ENCODE measurements at regions of chr17 and their contacts with region 1.

Region 1: GRCh38 chr17:58249270-58250133 is 11.1 kb downstream of the LPO start:
- DNase-seq: peak; percentile 99
- H3K4me3 ChIP-seq: peak overlapping the region; percentile 47 to 71
- H3K27ac ChIP-seq: no peak overlapping the region
- H3K4me1 ChIP-seq: peaks cover 0 to 8% of the 10 kb centered on the region in 2 experiments; a peak in 1 of 4 replicates
- H3K27me3 ChIP-seq: peaks cover 79% of the 10 kb centered on the region
- CTCF ChIP-seq: peak; percentile 99
- EP300 ChIP-seq: no peak
- RAD21 ChIP-seq: peak; percentile 66

Region 2: GRCh38 chr17:58200017-58200633 is 49.4 kb before region 1 on chr17:
- CTCF ChIA-PET with region 1: interaction called, 34 read pairs
- POLR2A ChIA-PET with region 1: no interaction called
- DNase-seq: peak; percentile 89
- H3K4me3 ChIP-seq: peak overlapping the region in 1 of 2 experiments; percentile 11; a peak in 2 of 4 replicates
- H3K27ac ChIP-seq: no peak overlapping the region
- H3K4me1 ChIP-seq: peaks cover 0 to 4% of the 10 kb centered on the region in 2 experiments; a peak in 1 of 4 replicates
- H3K27me3 ChIP-seq: peaks cover 34% of the 10 kb centered on the region
- CTCF ChIP-seq: peak; percentile 76
- EP300 ChIP-seq: no peak
- RAD21 ChIP-seq: peak; percentile 61

Region 3: GRCh38 chr17:58232707-58233156 is 16.8 kb before region 1 on chr17:
- CTCF ChIA-PET with region 1: interaction called, 73 read pairs
- POLR2A ChIA-PET with region 1: no interaction called
- DNase-seq: no peak
- H3K4me3 ChIP-seq: no peak overlapping the region
- H3K27ac ChIP-seq: no peak overlapping the region
- H3K4me1 ChIP-seq: no peaks in the 10 kb centered on the region
- H3K27me3 ChIP-seq: peaks cover 30% of the 10 kb centered on the region
- CTCF ChIP-seq: no peak
- EP300 ChIP-seq: no peak
- RAD21 ChIP-seq: no peak

Region 4: GRCh38 chr17:58277107-58277801 is 27.8 kb after region 1 on chr17:
- CTCF ChIA-PET with region 1: interaction called, 19 read pairs
- POLR2A ChIA-PET with region 1: no interaction called
- DNase-seq: no peak
- H3K4me3 ChIP-seq: no peak overlapping the region
- H3K27ac ChIP-seq: no peak overlapping the region
- H3K4me1 ChIP-seq: no peaks in the 10 kb centered on the region; a peak in 1 of 4 replicates
- H3K27me3 ChIP-seq: peaks cover 24% of the 10 kb centered on the region
- CTCF ChIP-seq: peak; percentile 37
- EP300 ChIP-seq: no peak
- RAD21 ChIP-seq: peak; percentile 57

Region 5: GRCh38 chr17:58382108-58382871 is 132.8 kb after region 1 on chr17:
- CTCF ChIA-PET with region 1: interaction called, 13 read pairs
- POLR2A ChIA-PET with region 1: no interaction called
- DNase-seq: no peak
- H3K4me3 ChIP-seq: no peak overlapping the region
- H3K27ac ChIP-seq: no peak overlapping the region
- H3K4me1 ChIP-seq: no peaks in the 10 kb centered on the region
- H3K27me3 ChIP-seq: peaks cover 36% of the 10 kb centered on the region
- CTCF ChIP-seq: no peak
- EP300 ChIP-seq: no peak
- RAD21 ChIP-seq: no peak

Region 6: GRCh38 chr17:58432806-58433572 is 183.5 kb after region 1 on chr17:
- CTCF ChIA-PET with region 1: interaction called, 16 read pairs
- POLR2A ChIA-PET with region 1: no interaction called
- DNase-seq: no peak
- H3K4me3 ChIP-seq: no peak overlapping the region
- H3K27ac ChIP-seq: no peak overlapping the region
- H3K4me1 ChIP-seq: no peaks in the 10 kb centered on the region
- H3K27me3 ChIP-seq: no peaks in the 10 kb centered on the region; the same call in 1 of the 2 replicates
- CTCF ChIP-seq: no peak
- EP300 ChIP-seq: no peak
- RAD21 ChIP-seq: no peak

Measured in SK-N-SH (cell line).